PC-3 (cell line): ENCODE measurements at regions of chr2 and their contacts with region 1.

Region 1: DNA sequence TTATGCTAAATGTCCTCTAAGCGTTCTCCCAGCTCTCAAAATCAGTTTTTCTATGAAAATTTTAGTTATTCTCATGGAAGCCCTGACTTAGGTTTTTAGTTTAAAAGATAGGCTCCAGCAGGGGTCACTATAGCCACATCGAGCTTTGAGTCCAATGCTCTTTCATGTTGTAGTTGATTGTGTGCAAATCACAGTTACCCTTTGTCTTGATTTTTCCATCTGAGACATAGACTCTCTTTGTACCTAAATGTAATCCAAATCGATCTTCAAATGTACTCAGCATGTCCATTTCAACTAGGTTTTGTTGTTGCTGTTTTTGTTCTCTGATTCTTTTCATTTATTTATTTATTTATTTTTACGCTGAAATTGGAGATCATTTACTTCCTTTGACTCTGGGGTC is 26.4 kb upstream of the MSTN start:
- DNase-seq: peak; percentile 85
- ATAC-seq: peak; percentile 69
- H3K4me3 ChIP-seq: no peak overlapping the region
- H3K27ac ChIP-seq: no peak overlapping the region
- H3K4me1 ChIP-seq: no peaks in the 10 kb centered on the region
- H3K27me3 ChIP-seq: no peaks in the 10 kb centered on the region
- CTCF ChIP-seq: peak; percentile 87

Region 2: GRCh38 chr2:189836657-189837056 is 252.3 kb before region 1 on chr2:
- CTCF ChIA-PET with region 1: no interaction called
- POLR2A ChIA-PET with region 1: no interaction called
- intact Hi-C with region 1: no loop called
- DNase-seq: peak; percentile 80
- ATAC-seq: peak; percentile 96
- H3K4me3 ChIP-seq: peak overlapping the region; percentile 3; the same call in 1 of the 2 replicates
- H3K27ac ChIP-seq: peak overlapping the region; percentile 65
- H3K4me1 ChIP-seq: peaks cover 17% of the 10 kb centered on the region
- H3K27me3 ChIP-seq: no peaks in the 10 kb centered on the region
- CTCF ChIP-seq: no peak

Region 3: DNA sequence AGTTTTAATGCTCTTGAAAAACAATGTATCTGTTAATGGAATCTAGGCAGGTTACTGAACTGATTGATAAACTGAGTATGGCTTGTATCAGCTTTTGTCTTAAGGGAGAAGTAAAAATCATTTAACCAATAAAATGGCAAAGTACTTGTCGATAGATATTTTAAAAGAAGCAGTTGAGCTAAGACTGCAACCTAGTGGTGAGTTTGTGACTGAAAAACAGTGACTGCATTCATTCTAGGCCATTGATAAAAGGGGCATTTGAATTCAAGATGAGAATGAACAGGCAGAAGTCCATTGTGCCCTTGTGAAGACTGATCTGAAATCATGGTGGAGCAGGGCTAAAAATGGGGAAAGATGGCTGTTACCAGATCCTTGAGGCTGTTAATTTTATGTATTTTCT is 33.1 kb after region 1 on chr2:
- CTCF ChIA-PET with region 1: no interaction called
- POLR2A ChIA-PET with region 1: no interaction called
- intact Hi-C with region 1: loop called (anchors 1 kb)
- DNase-seq: peak; percentile 45
- ATAC-seq: peak; percentile 62
- H3K4me3 ChIP-seq: no peak overlapping the region
- H3K27ac ChIP-seq: no peak overlapping the region
- H3K4me1 ChIP-seq: no peaks in the 10 kb centered on the region
- H3K27me3 ChIP-seq: no peaks in the 10 kb centered on the region
- CTCF ChIP-seq: peak; percentile 72

Region 4: DNA sequence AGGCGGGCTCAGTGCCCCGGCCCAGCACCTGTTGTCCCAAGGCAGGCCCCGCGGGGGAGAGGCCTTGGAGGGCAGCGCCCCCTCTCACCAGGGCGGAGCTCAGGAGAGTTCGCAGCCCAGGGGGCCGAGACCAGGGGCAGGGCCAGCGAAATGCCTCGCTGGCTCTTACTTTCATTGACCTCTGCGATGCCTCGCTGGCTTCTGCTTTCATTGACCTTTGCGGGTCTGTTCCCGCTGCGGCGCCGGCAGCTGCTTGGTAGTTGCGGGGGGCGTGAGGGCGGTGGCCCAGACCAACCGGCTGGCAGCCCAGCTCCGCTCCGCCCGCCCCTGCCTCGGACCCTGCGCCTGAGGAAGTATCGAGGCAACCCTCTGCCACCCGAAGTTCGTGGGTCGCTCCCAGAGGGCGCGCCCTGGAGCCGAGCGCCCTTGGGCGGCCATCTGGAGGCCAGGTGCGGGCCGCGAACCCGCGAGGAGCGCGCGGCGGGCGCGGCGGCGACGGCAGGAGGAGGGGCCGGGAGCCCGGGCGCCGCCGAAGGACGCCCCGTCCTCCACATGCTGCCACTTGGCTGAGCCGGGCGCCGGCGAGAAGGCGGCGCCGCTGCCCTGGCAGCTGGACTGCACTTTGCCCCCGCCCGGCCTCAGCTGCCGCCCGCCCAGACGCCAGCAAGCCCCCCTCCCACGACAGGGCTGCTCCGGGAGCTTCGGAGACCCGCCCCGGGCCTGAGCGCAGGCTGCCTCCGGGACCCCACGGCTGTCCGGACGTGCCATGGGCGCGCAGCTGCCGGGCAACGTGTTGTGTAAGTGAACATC is 91.6 kb after region 1 on chr2:
- CTCF ChIA-PET with region 1: no interaction called
- POLR2A ChIA-PET with region 1: no interaction called
- intact Hi-C with region 1: loop called (anchors 5 kb)
- DNase-seq: no peak
- ATAC-seq: no peak
- H3K4me3 ChIP-seq: no peak overlapping the region
- H3K27ac ChIP-seq: no peak overlapping the region
- H3K4me1 ChIP-seq: no peaks in the 10 kb centered on the region
- H3K27me3 ChIP-seq: no peaks in the 10 kb centered on the region
- CTCF ChIP-seq: 0 out of 2 replicates have a peak, but pooled peaks have one; percentile 19

Region 5: GRCh38 chr2:190202604-190203003 is 113.7 kb after region 1 on chr2:
- CTCF ChIA-PET with region 1: no interaction called
- POLR2A ChIA-PET with region 1: no interaction called
- intact Hi-C with region 1: loop called (anchors 5 kb)
- DNase-seq: peak; percentile 53
- ATAC-seq: peak; percentile 81
- H3K4me3 ChIP-seq: no peak overlapping the region
- H3K27ac ChIP-seq: no peak overlapping the region
- H3K4me1 ChIP-seq: peaks cover 6% of the 10 kb centered on the region; the same call in 1 of the 2 replicates
- H3K27me3 ChIP-seq: no peaks in the 10 kb centered on the region
- CTCF ChIP-seq: peak; percentile 52; the same call in 1 of the 2 replicates

Region 6: GRCh38 chr2:190277234-190278112 is 188.6 kb after region 1 on chr2:
- CTCF ChIA-PET with region 1: no interaction called
- POLR2A ChIA-PET with region 1: no interaction called
- intact Hi-C with region 1: loop called (anchors 1 kb)
- DNase-seq: peak; percentile 58
- ATAC-seq: peak; percentile 60
- H3K4me3 ChIP-seq: no peak overlapping the region; the same call in 1 of the 2 replicates
- H3K27ac ChIP-seq: no peak overlapping the region
- H3K4me1 ChIP-seq: no peaks in the 10 kb centered on the region
- H3K27me3 ChIP-seq: no peaks in the 10 kb centered on the region
- CTCF ChIP-seq: peak; percentile 73

Region 7: GRCh38 chr2:190319555-190320498 is 230.9 kb after region 1 on chr2 and contains the start of gene HIBCH:
- CTCF ChIA-PET with region 1: no interaction called
- POLR2A ChIA-PET with region 1: no interaction called
- intact Hi-C with region 1: loop called (anchors 1 kb)
- DNase-seq: peak; percentile 99
- ATAC-seq: peak; percentile 95
- H3K4me3 ChIP-seq: peak within 1 kb of the TSS; percentile 95
- H3K27ac ChIP-seq: no peak within 1 kb of the TSS
- H3K4me1 ChIP-seq: peaks cover 26% of the 10 kb centered on the region
- H3K27me3 ChIP-seq: no peaks in the 10 kb centered on the region
- CTCF ChIP-seq: peak; percentile 86
- total RNA-seq, gene HIBCH: 8.1 and 12.0 TPM in 2 replicates

Region 8: GRCh38 chr2:190376591-190377245 is 287.8 kb after region 1 on chr2:
- CTCF ChIA-PET with region 1: no interaction called
- POLR2A ChIA-PET with region 1: no interaction called
- intact Hi-C with region 1: loop called (anchors 1 kb)
- DNase-seq: peak; percentile 40
- ATAC-seq: no peak; the same call in 1 of the 2 replicates
- H3K4me3 ChIP-seq: no peak overlapping the region
- H3K27ac ChIP-seq: no peak overlapping the region
- H3K4me1 ChIP-seq: peaks cover 16% of the 10 kb centered on the region
- H3K27me3 ChIP-seq: no peaks in the 10 kb centered on the region
- CTCF ChIP-seq: no peak